Dorsolateral prefrontal cortex (tissue), 120 donors: ENCODE measurements at regions of chr3 and their contacts with region 1.

Region 1: DNA sequence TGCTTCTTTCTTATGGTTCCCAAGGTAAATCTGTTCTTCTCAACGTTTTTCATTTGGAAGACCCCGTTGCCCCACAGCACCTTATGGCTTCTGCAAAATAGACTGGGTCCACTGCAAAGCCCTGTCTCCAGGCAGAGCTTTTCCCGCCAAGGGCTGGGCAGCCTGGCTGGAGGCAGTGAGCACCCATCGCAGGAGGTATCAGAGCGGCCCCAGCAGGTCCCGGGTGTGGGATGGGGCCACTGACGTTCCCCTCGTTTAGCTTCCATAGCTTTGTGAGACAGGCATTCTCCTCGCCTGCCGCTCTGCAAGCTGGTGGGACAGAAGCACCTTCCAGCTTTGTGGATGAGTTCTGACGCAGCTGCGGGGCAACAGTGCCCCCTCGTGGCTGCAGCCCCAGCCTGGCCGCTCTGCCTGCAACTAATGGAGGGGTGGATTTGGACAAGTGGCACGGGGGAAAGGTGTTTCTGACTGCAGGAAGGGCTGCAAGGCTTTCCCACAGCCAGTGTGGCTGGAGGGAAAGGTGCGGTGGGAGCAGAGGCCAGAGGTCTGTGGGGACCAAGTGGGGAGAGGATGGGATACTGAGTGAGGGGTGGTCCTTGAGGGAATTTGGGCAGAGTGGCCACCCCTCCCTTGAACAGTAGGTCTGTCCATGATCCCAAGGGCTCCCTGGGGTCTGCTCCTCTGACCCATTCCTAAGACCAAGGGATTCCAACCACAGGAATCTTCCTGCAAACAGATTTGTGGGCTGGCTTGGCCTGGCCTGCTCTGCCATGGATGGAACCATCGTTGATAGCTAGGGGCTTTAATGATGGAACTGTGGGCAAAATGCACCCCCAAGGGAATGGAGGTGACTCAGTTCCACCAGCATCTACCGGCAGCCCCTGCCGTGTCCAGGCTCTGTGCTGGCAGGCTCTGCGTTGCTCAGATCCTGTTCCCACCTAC is 99.4 kb downstream of the FBLN2 start:
- DNase-seq: peak; percentile 79 to 92 (median 88)
- H3K4me3 ChIP-seq: peak overlapping the region in 3 of 59 donors; percentile 18 to 25 (median 24)
- H3K27ac ChIP-seq: peak overlapping the region in 1 of 59 donors; percentile 61
- H3K27me3 ChIP-seq: peaks cover 0 to 5% (median 0%) of the 10 kb centered on the region in 45 donors
- CTCF ChIP-seq: peak; percentile 86 to 100 (median 98)

Region 2: DNA sequence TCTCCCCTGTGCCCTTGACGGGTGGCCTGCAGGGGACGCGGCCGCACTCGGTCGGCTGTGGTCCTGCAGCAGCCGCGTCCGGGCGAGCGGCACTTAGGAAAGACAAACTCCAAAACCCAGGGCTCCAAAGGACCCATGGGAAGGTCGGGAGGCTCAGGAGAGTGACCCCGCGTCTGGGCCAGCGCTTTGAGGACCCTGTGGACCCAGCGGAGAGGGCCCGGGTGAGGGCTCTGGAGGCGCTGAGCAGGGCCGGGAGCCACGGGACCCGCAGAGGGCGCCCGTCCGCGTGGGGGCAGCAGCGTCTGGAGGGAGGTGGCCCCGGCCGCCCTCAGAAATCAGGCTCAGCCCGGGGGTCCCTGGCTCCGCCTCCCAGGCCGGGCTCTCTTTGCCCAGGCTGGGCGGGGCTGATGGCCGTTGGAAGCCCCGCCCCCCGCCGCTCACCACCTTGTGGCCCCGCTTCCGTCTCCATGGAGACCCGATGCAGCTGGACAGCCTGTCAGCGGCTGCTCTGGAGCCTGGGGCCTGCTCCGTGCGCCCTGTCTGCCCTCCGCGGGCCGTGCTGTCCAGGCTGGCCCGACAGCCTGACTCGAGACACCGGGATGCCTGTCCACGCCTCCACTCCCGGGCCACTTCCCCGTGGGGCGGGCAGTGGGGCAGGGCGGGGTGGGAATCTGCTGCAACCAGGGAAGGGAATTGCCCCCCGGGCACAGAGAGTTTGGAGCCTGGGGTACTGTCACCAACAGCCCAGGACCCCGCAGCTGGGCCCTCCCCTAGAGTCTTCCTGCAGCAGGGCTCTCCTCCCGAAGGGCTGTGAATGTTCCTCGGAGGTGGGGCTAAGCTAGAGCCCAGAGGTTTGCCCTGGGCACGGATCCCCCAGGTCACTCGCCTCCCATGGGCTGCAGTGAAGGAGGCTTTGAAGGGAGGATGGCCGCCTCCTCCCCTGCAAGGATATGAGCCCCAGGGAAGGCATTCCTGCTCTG is 772.2 kb before region 1 on chr3:
- intact Hi-C with region 1: loop called in 1 of 2 experiments (anchors 10 kb)
- DNase-seq: no peak
- H3K4me3 ChIP-seq: peak overlapping the region in 50 of 59 donors; percentile 2 to 56 (median 36)
- H3K27ac ChIP-seq: no peak overlapping the region
- H3K27me3 ChIP-seq: peaks cover 0 to 3% (median 0%) of the 10 kb centered on the region in 45 donors
- CTCF ChIP-seq: peak in 26 of 56 donors; percentile 16 to 49 (median 28)

Region 3: GRCh38 chr3:13091898-13092611 is 556.3 kb before region 1 on chr3:
- intact Hi-C with region 1: loop called (anchors 2 to 5 kb)
- DNase-seq: peak; percentile 80 to 92 (median 88)
- H3K4me3 ChIP-seq: peak overlapping the region in 15 of 59 donors; percentile 6 to 31 (median 22)
- H3K27ac ChIP-seq: peak overlapping the region in 14 of 59 donors; percentile 12 to 62 (median 32)
- H3K27me3 ChIP-seq: no peaks in the 10 kb centered on the region
- CTCF ChIP-seq: peak; percentile 81 to 99 (median 98)

Region 4: GRCh38 chr3:13277860-13278531 is 370.3 kb before region 1 on chr3:
- intact Hi-C with region 1: loop called in 1 of 2 experiments (anchors 10 kb)
- DNase-seq: peak in 3 of 10 donors; percentile 33 to 66 (median 58)
- H3K4me3 ChIP-seq: peak overlapping the region in 49 of 59 donors; percentile 1 to 55 (median 36)
- H3K27ac ChIP-seq: peak overlapping the region; percentile 45 to 92 (median 83)
- H3K27me3 ChIP-seq: no peaks in the 10 kb centered on the region
- CTCF ChIP-seq: no peak

Region 5: DNA sequence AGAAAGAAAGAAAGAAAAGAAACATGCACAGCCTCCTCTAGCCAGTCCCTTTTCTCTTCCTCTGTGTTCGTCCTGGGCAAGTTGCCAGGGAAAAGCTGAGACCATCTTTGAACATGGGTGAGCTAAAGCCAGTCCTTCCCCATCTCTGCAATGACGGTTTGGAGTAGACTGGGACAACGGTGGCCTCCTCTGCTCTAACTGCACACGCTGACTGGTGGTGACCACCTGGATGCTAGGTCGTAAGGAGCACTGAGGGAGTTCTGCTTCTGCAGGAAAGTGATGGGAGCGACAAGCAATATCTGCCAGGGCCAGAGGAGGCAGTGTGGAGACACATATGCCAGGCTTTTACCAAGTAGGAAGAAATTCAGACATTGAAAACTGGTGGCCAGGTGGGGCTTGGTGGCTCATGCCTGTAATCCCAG is 339.9 kb before region 1 on chr3:
- intact Hi-C with region 1: loop called in 1 of 2 experiments (anchors 10 kb)
- DNase-seq: peak in 8 of 10 donors; percentile 18 to 73 (median 58)
- H3K4me3 ChIP-seq: peak overlapping the region in 20 of 59 donors; percentile 6 to 44 (median 30)
- H3K27ac ChIP-seq: peak overlapping the region in 1 of 59 donors; percentile 7
- H3K27me3 ChIP-seq: no peaks in the 10 kb centered on the region
- CTCF ChIP-seq: peak in 54 of 56 donors; percentile 31 to 78 (median 63)

Region 6: DNA sequence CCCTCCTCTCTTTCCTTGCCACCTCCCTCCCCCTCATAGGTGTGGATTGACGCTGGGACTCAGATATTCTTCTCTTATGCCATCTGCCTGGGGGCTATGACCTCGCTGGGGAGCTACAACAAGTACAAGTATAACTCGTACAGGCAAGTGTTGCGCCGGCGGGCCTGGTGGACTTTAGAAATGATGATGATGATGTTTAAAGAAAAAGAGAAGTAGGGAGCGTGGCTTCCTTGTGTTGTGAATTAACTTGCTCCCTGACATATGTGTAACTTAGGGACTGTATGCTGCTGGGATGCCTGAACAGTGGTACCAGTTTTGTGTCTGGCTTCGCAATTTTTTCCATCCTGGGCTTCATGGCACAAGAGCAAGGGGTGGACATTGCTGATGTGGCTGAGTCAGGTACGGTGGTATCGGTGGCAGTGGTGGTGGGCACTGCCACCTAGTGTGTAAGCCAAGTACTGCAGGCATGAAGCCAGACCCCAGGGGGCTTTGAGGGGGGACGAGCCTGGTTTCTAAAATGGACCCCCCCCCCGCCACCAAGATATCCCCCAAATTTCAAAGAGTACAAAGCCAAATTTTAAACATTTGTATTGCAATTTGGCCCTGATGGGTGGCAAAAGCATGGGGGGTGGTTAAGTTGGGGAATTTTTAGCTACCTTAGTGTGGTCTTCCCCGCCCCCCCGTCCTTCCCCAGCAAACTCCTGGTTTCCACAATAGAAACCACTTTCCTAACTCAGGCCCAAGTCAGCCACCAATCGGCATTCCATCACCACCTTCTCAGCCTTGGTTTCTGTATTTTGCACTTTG is 819.7 kb after region 1 on chr3:
- intact Hi-C with region 1: loop called in 1 of 2 experiments (anchors 5 kb)
- DNase-seq: peak in 5 of 10 donors; percentile 40 to 67 (median 42)
- H3K4me3 ChIP-seq: no peak overlapping the region
- H3K27ac ChIP-seq: no peak overlapping the region
- H3K27me3 ChIP-seq: no peaks in the 10 kb centered on the region
- CTCF ChIP-seq: peak; percentile 68 to 96 (median 88)